MCF 10A (cell line): ENCODE measurements at regions of chr10 and their contacts with region 1.

Region 1: GRCh38 chr10:110414563-110415309 is 83.0 kb upstream of the DUSP5 start:
- DNase-seq: peak; percentile 89
- H3K4me3 Mint-ChIP-seq: no peak overlapping the region
- H3K27ac Mint-ChIP-seq: peak overlapping the region; percentile 2
- H3K4me1 Mint-ChIP-seq: peaks cover 58% of the 10 kb centered on the region
- H3K27me3 Mint-ChIP-seq: no peaks in the 10 kb centered on the region
- CTCF ChIP-seq: no peak

Region 2: DNA sequence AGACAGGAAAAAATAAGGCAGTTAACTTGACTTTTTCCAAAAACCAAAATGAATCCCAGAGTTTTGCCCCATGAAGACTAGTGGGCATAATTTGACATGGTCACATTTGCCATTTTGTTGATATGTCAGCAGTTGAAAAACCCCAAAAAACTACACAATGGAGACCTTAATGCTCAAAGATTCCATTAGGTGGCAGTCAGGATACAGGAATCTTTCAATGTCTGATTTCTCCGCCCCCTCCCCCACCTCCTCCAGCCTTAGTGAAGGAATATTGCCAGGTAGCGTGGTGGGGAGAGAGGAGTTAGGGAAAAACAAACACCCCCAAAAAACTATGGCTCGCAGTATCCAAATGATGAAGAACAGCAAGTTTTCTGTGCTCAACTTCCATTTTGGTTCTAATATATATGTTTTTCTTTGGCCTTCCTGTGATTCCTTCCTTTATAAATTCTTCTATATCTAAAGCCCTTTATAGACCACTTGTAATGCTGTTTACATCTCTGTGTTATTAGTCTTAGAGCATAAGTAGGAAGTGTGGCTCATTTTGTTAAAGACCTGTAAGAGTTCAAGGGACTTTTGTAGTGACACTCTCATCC is 103.3 kb before region 1 on chr10:
- CTCF ChIA-PET with region 1: interaction called, 3 read pairs
- POLR2A ChIA-PET with region 1: interaction called, 5 read pairs
- intact Hi-C with region 1: loop called (anchors 5 kb)
- DNase-seq: peak; percentile 77
- H3K4me3 Mint-ChIP-seq: no peak overlapping the region
- H3K27ac Mint-ChIP-seq: no peak overlapping the region
- H3K4me1 Mint-ChIP-seq: no peaks in the 10 kb centered on the region
- H3K27me3 Mint-ChIP-seq: no peaks in the 10 kb centered on the region
- CTCF ChIP-seq: peak; percentile 69

Region 3: GRCh38 chr10:110395725-110396651 is 18.7 kb before region 1 on chr10:
- CTCF ChIA-PET with region 1: interaction called, 8 read pairs
- POLR2A ChIA-PET with region 1: interaction called, 38 read pairs
- intact Hi-C with region 1: loop called (anchors 1 kb)
- DNase-seq: peak; percentile 95
- H3K4me3 Mint-ChIP-seq: no peak overlapping the region
- H3K27ac Mint-ChIP-seq: peak overlapping the region; percentile 92
- H3K4me1 Mint-ChIP-seq: peaks cover 53% of the 10 kb centered on the region
- H3K27me3 Mint-ChIP-seq: no peaks in the 10 kb centered on the region
- CTCF ChIP-seq: no peak

Region 4: GRCh38 chr10:110502851-110503301 is 88.1 kb after region 1 on chr10:
- CTCF ChIA-PET with region 1: interaction called, 6 read pairs
- POLR2A ChIA-PET with region 1: interaction called, 25 read pairs
- intact Hi-C with region 1: no loop called
- DNase-seq: peak; percentile 94
- H3K4me3 Mint-ChIP-seq: peak overlapping the region; percentile 39
- H3K27ac Mint-ChIP-seq: peak overlapping the region; percentile 94
- H3K4me1 Mint-ChIP-seq: peaks cover 54% of the 10 kb centered on the region
- H3K27me3 Mint-ChIP-seq: no peaks in the 10 kb centered on the region
- CTCF ChIP-seq: no peak